Posterior vena cava (tissue), 2 donors: ENCODE measurements at regions of chr6 and their contacts with region 1.

Region 1: GRCh38 chr6:112180095-112180820 is 74.1 kb downstream of the LAMA4 start:
- DNase-seq: no peak

Region 2: DNA sequence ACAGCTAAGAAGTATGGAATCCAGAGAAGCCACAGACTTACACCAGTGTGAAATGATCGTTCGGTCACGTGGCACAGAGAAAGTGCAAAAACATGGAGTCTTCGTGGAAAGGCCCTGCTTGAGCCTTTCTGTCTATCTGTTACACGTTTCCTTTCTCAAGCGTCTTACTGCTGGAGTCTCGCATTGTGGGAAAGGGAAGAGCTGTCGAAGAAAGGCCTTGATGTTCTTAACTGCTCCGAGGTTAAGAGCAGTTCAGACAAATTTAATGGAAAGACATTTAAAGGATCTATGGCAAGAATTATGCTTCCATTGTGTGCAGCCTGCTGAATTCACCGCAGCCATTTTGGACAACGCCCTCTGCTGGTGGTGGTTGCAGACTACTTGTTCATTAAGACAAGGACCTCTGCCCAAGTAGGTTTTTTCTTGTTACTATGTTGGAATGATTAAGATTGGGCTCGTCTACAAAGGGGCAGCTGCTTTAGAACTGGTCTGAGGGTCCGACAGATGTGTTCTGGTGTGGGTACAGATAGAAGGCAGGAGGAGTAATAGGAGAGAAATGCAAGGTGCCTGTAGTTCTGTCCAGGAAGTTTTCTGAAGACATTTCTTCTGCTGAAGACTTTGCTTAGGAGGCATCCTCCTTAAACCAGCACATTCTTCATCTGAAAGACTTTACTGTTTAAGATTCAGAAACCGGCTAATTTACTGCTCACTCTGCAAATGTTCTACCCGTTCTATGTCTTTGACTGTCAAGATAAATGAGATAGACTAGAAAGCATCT is 151.0 kb before region 1 on chr6:
- intact Hi-C with region 1: no loop called
- DNase-seq: no peak

Region 3: GRCh38 chr6:112128208-112128607 is 52.0 kb before region 1 on chr6:
- intact Hi-C with region 1: no loop called
- DNase-seq: no peak

Region 4: DNA sequence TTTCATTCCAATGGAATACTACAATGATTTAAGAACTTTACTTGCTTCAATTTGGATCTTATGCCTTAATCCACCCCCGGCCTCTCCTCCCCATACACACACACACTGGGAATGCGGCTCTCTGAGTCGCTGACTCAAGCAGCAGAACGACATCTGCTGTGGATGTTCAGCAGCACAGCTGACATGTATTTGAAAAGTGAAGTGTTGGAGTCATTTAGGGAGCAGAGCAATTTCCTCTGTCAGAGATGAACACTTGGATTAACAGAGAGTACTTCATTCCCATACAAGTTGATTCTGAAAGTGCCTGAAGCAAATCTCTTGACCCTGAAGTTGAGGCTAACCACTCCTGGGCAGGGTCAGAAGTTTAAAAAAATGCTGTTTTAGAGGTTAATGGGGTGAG is 102.0 kb after region 1 on chr6:
- intact Hi-C with region 1: loop called in 1 of 2 experiments (anchors 10 kb)
- DNase-seq: no peak

Region 5: GRCh38 chr6:112311950-112312547 is 131.8 kb after region 1 on chr6:
- intact Hi-C with region 1: loop called in 1 of 2 experiments (anchors 5 kb)
- DNase-seq: no peak

Region 6: DNA sequence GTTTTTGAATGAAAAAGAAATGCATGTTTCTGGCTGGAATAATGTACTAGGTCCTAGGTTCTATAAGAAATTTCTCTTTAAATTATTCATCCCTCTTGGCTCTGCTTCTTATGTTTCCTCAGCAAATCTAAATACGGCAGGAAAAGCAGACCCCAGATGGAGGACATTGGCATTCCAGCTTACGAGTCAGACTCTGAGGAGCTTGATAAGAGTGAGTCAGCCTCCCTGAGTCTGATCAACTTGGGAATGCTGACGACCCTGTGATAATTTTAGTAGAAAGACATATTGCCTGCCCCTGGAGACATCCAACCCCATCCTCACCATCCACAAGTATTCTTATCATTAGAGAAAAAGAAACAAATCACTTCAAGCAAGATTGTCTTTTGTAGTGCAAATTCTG is 1167.2 kb after region 1 on chr6:
- intact Hi-C with region 1: no loop called
- DNase-seq: no peak